Caco-2 (cell line): ENCODE measurements at regions of chr1 and their contacts with region 1.

Region 1: GRCh38 chr1:107056426-107057196 is at the start of gene PRMT6:
- DNase-seq: peak; percentile 75 to 79
- H3K4me3 ChIP-seq: peak within 1 kb of the TSS; percentile 67
- H3K4me3 Mint-ChIP-seq: peak within 1 kb of the TSS; percentile 88
- H3K27ac Mint-ChIP-seq: peak within 1 kb of the TSS; percentile 78
- H3K4me1 ChIP-seq: no peaks in the 10 kb centered on the region
- H3K4me1 Mint-ChIP-seq: no peaks in the 10 kb centered on the region
- H3K27me3 ChIP-seq: no peaks in the 10 kb centered on the region
- H3K27me3 Mint-ChIP-seq: no peaks in the 10 kb centered on the region
- CTCF ChIP-seq: no peak
- total RNA-seq, gene PRMT6: 11.3 and 11.5 TPM in 2 replicates

Region 2: DNA sequence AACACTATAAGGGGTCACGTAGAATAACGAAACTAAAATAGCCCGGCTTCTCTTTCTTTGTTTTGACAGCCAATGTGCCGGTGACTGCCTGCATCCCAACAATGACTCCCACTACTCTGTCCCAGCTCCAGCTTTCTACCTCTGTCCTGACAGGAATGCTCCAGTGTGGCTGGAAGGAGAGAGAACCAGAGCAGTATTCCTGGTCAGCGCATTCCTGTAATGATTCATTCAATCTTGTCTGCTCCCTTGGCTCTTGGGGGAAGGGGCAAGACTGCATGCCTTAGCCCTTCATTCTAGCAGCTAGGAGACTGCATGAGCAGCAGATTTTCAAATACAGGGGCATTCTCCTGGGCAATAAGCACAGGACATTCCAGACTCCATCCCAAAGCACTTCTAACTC is 132.3 kb before region 1 on chr1:
- CTCF ChIA-PET with region 1: no interaction called
- POLR2A ChIA-PET with region 1: no interaction called
- intact Hi-C with region 1: no loop called
- DNase-seq: no peak
- H3K4me3 ChIP-seq: no peak overlapping the region
- H3K4me3 Mint-ChIP-seq: no peak overlapping the region
- H3K27ac Mint-ChIP-seq: no peak overlapping the region
- H3K4me1 ChIP-seq: no peaks in the 10 kb centered on the region
- H3K4me1 Mint-ChIP-seq: no peaks in the 10 kb centered on the region
- H3K27me3 ChIP-seq: no peaks in the 10 kb centered on the region
- H3K27me3 Mint-ChIP-seq: peaks cover 3% of the 10 kb centered on the region
- CTCF ChIP-seq: no peak

Region 3: GRCh38 chr1:107076841-107077240 is 20.2 kb after region 1 on chr1:
- CTCF ChIA-PET with region 1: no interaction called
- POLR2A ChIA-PET with region 1: no interaction called
- intact Hi-C with region 1: loop called (anchors 1 kb)
- DNase-seq: peak in 1 of 2 experiments; percentile 1
- H3K4me3 ChIP-seq: no peak overlapping the region
- H3K4me3 Mint-ChIP-seq: no peak overlapping the region
- H3K27ac Mint-ChIP-seq: no peak overlapping the region
- H3K4me1 ChIP-seq: no peaks in the 10 kb centered on the region
- H3K4me1 Mint-ChIP-seq: no peaks in the 10 kb centered on the region
- H3K27me3 ChIP-seq: no peaks in the 10 kb centered on the region
- H3K27me3 Mint-ChIP-seq: peaks cover under 1% of the 10 kb centered on the region
- CTCF ChIP-seq: no peak

Region 4: DNA sequence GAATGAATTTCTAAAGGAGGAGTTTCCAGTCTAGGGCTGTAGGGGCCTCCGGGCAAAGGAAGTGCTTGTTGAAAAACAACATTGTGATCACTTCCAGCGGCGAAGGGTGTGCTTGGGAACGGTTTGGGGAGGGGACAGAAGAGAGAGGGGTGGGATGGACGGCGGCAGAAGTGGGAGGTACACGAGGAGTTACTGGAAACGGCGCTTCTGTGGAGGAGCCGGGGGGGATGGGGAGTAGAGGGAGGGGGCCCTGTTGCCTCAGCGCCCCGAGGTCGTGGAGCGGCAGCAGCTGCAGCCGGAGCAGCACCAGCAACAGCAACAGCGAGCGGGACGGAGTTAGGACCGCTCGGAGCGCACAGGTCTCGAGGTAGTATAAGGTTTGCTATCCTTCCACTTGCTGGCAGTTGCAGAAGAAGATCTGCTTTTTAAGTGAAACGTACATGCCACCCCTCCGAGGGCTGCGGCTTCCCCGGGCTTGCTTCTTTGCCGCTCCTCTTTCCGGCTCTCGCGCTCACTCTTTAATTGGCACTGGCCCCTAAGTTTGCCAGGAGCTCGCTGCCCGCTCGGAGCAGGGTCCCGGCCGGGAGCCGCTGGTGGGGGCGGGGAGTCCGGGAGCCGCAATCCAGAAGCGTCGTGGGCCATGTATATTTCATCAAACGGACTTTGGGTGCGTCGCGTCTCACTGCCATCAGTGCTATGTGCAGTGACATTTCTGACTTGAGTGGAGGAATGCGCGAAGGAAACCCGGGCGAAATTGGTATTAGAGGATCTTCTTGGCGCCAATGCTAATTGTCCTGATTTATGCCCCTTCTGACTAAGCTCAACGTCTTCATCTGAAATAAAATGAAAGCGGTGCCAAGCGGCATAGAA is 83.5 kb after region 1 on chr1:
- CTCF ChIA-PET with region 1: no interaction called
- POLR2A ChIA-PET with region 1: no interaction called
- intact Hi-C with region 1: loop called (anchors 2 kb)
- DNase-seq: no peak
- H3K4me3 ChIP-seq: peak overlapping the region; percentile 14
- H3K4me3 Mint-ChIP-seq: peak overlapping the region; percentile 61
- H3K27ac Mint-ChIP-seq: no peak overlapping the region
- H3K4me1 ChIP-seq: no peaks in the 10 kb centered on the region
- H3K4me1 Mint-ChIP-seq: no peaks in the 10 kb centered on the region
- H3K27me3 ChIP-seq: no peaks in the 10 kb centered on the region
- H3K27me3 Mint-ChIP-seq: peaks cover 2% of the 10 kb centered on the region
- CTCF ChIP-seq: no peak

Region 5: GRCh38 chr1:107196973-107197562 is 140.5 kb after region 1 on chr1:
- CTCF ChIA-PET with region 1: no interaction called
- POLR2A ChIA-PET with region 1: no interaction called
- intact Hi-C with region 1: no loop called
- DNase-seq: peak in 1 of 2 experiments; percentile 9
- H3K4me3 ChIP-seq: no peak overlapping the region
- H3K4me3 Mint-ChIP-seq: no peak overlapping the region
- H3K27ac Mint-ChIP-seq: no peak overlapping the region
- H3K4me1 ChIP-seq: no peaks in the 10 kb centered on the region
- H3K4me1 Mint-ChIP-seq: peaks cover 10% of the 10 kb centered on the region
- H3K27me3 ChIP-seq: no peaks in the 10 kb centered on the region
- H3K27me3 Mint-ChIP-seq: no peaks in the 10 kb centered on the region
- CTCF ChIP-seq: no peak